Posterior cingulate gyrus (tissue), 11 donors: ENCODE measurements at regions of chr2 and their contacts with region 1.

Region 1: DNA sequence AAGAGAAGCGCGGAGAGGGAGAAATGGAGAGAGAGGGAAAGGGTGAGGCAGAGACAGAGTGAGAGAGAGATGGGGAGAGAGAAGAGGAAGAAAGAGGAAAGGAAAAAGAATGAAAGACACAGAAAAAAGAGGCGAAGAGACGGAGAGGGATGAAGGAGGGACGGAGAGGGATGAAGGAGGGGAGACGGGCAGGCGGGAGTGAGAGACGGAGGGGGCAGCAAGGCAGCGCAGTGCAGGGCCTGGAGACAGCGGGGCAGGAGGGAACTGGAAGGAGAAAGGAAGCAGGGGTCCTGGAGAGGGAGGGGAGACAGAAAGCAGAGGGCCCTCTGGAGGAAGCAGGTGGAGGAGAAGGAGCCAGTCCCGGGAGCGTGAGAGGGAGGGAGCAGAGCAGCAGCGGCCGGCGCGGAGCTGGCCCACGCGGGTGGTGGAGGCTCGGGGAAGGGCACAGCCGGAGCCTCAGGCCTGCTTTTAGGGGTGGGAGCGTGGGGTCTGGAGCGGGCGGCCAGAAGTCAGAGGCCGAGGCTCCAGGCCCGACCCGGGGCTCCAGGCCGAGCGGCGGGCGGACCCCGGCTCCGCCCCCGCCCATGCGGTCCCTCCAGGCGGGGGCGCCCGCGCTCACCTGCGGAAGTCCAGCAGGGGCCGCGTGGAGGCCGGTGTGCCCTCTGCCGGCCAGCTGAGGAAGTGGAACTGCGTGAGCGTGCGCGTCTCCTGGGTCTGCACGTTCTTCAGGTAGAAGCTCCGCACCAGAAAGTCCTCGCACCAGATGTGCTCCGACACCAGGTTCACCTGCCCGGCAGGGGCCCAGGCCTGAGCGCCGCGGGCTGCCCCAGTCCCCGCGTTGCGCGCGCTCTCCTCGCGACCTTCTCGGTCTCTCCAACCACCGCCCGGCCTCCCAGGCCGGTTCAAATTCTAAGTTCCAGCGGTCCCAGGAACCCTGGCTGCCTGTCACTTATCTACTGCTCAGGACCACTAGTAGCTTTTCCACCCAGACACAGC is 14.5 kb downstream of the PTPRN start:
- DNase-seq: peak; percentile 77 to 98 (median 84)

Region 2: GRCh38 chr2:219160186-219161017 is 134.3 kb before region 1 on chr2 and contains the start of gene NHEJ1:
- intact Hi-C with region 1: loop called (anchors 1 kb)
- DNase-seq: peak; percentile 86 to 99 (median 95)

Region 3: DNA sequence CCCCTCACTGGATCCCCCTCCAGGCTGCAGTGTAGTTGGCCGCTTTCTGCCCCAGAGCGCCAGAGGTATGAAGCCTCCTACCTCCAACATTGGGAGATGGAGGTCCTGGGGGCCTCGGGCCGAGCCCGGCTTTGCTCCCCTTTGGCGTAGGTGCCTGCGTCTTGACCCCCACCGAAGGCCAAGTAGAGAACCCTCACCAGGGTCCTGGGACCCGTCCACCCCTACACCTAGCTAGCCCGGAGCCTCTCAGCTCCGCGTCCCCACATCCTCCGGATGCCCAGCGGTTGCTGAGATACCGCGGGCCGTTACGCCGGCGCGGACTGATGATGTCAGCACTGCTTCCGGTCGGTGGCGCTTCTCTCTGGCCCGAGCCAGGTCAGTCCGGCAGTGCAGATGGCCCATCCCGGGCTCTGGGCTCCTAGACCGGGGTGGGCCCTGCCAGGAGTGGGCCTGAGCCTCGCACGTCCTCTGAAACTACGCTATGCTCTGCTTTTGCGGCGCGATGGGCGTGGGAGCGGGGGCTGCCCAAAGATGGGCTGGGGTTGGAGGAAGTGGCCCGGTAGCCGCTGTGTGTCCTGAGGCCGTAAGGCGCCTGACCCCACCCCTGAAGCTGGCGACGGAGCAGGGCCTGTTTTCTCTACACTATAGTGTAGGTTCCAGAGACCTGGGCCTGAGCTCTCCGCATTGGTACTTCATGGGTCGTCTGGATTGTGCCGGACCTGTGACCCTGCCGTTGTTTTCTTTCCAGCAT is 49.3 kb before region 1 on chr2 and contains the starts of genes GLB1L and STK16:
- intact Hi-C with region 1: loop called (anchors 5 kb)
- DNase-seq: peak; percentile 91 to 99 (median 94)

Region 4: GRCh38 chr2:219278655-219279516 is 15.8 kb before region 1 on chr2 and contains the start of gene DNAJB2:
- intact Hi-C with region 1: loop called (anchors 1 kb)
- DNase-seq: peak; percentile 98 to 100 (median 99)